ENCODE measurements at regions of chr7 and their contacts with region 1.

Region 1: DNA sequence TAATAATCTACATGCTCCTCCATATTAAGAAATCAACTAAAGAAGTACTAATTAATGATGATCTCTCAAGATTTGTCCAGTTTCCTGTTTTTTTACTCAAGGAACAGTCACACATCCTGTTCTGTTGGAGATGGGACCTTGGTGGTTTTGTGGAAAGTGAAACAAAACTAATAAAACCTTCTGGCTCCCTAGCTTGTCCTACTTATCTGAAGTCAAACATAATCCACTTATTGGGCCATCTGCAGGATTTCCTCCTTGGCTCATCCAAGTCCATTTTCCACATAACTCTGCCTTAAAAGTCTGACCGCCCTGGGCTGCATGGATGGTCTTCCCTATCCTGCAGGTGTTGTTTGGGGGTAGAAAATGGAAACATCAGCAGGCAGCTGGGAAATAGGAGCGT is 39.4 kb upstream of the TARP start:
- DNase-seq: no peak
- ATAC-seq: no peak
- H3K4me3 Mint-ChIP-seq: peak overlapping the region in 4 of 10 donors; percentile 18 to 61 (median 42)
- H3K27ac Mint-ChIP-seq: peak overlapping the region in 8 of 10 donors; percentile 29 to 88 (median 48)
- H3K4me1 Mint-ChIP-seq: peaks cover 0 to 60% (median 10%) of the 10 kb centered on the region in 4 donors
- H3K27me3 Mint-ChIP-seq: no peaks in the 10 kb centered on the region

Region 2: GRCh38 chr7:38242814-38243213 is 70.0 kb before region 1 on chr7:
- POLR2A ChIA-PET with region 1: no interaction called
- DNase-seq: no peak
- ATAC-seq: no peak
- H3K4me3 Mint-ChIP-seq: peak overlapping the region in 2 of 10 donors; percentile 15 to 52
- H3K27ac Mint-ChIP-seq: peak overlapping the region in 5 of 10 donors; percentile 43 to 93 (median 53)
- H3K4me1 Mint-ChIP-seq: peaks cover 0 to 31% (median 4%) of the 10 kb centered on the region in 4 donors
- H3K27me3 Mint-ChIP-seq: no peaks in the 10 kb centered on the region

Region 3: GRCh38 chr7:38369816-38370493 is 57.1 kb after region 1 on chr7:
- POLR2A ChIA-PET with region 1: interaction called, 11 read pairs
- DNase-seq: peak; percentile 41 to 88 (median 68)
- ATAC-seq: peak; percentile 71 to 75
- H3K4me3 Mint-ChIP-seq: peak overlapping the region; percentile 34 to 76 (median 60)
- H3K27ac Mint-ChIP-seq: peak overlapping the region; percentile 89 to 100 (median 93)
- H3K4me1 Mint-ChIP-seq: peaks cover 36 to 76% (median 67%) of the 10 kb centered on the region in 4 donors
- H3K27me3 Mint-ChIP-seq: no peaks in the 10 kb centered on the region

Measured in naive thymus-derived CD8-positive, alpha-beta T cell (primary cell).